RWPE1 (cell line): ENCODE measurements at regions of chr20 and their contacts with region 1.

Region 1: DNA sequence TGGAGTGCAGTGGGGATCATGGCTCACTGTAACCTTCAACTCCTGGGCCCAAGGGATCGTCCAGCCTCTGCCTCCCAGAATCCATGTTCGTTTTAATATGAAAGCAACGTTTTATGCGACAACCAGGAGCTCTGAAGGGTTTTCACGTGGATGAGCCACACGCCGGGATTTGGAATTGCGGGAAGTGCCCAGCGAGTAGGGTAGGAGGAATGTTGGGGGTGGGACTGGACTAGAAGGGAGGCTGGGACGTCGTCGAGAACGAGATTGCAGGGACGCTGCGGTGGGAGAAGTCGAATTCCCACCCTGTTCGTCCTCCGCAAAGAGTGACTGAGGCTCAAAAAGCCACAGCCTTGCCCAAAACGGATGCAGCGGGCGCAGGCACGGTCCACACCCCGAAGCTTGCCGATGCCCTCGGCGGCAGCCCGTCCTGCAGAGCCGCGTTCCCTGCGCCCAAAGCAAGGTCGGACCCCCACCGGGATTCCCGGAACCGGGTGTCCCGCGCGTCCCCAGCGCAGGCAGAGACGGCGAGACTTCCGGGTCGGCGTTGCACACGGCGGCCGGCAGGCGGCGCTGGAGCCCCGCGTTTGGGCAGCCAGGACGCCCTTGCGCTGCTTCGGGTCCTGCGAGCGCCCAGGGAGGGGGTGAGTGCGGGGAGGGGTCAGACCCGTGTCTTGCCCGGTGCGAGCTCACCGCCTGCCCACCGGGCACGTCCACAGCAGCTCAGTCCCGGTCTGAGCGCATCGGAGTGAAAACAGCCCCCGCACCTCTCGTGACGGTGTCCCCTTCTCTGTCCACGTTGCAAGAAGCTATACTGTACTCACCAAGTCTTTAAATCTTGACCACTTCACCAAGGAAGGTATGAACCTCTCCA is 87.8 kb downstream of the DHX35 start:
- DNase-seq: peak; percentile 74
- H3K27ac ChIP-seq: peak overlapping the region; percentile 45
- CTCF ChIP-seq: peak; percentile 100

Region 2: GRCh38 chr20:38919683-38920082 is 130.2 kb before region 1 on chr20:
- CTCF ChIA-PET with region 1: interaction called, 13 read pairs
- POLR2A ChIA-PET with region 1: no interaction called
- DNase-seq: no peak
- H3K27ac ChIP-seq: no peak overlapping the region
- CTCF ChIP-seq: no peak

Region 3: DNA sequence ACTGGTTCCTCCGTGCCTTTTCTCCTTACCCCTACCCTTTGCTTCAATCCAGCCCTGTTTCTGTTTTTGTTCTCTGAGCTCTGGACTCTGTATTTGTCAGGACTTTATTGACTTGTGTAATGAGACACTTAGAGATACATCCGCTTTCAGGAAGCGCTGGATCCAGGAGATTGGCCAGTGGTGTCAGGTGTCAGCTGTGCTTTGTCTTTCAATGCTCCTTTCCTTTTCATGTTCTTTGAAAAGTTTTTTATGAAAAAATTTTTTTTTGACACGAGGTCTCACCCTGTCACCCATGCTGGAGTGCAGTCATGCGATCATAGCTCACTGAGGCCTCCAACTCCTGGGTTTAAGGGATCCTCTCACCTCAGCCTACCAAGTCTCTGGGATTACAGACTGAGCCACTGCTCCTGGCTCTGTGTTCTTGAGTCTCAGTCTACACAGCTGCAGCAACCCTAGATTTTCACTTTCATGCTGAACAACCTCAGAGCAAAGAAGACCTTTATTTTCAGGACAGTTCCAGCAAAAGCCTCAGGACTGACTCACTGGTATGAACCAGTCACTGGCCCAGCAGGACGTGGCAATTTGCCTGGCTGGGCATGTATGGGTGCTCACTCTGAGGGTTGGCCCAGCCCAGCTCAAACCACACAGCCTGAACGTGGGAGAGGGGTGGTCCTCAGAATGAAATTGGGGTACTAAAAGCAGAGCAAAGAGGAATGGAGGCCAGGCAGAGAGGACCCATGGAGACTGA is 20.7 kb after region 1 on chr20:
- CTCF ChIA-PET with region 1: interaction called, 163 read pairs
- POLR2A ChIA-PET with region 1: interaction called, 3 read pairs
- DNase-seq: peak; percentile 84
- H3K27ac ChIP-seq: no peak overlapping the region
- CTCF ChIP-seq: no peak

Region 4: GRCh38 chr20:39081255-39081654 is 31.3 kb after region 1 on chr20:
- CTCF ChIA-PET with region 1: interaction called, 163 read pairs
- POLR2A ChIA-PET with region 1: interaction called, 3 read pairs
- DNase-seq: peak; percentile 94
- H3K27ac ChIP-seq: no peak overlapping the region
- CTCF ChIP-seq: peak; percentile 99

Region 5: GRCh38 chr20:39103732-39104131 is 53.8 kb after region 1 on chr20:
- CTCF ChIA-PET with region 1: interaction called, 10 read pairs
- POLR2A ChIA-PET with region 1: no interaction called
- DNase-seq: no peak
- H3K27ac ChIP-seq: no peak overlapping the region
- CTCF ChIP-seq: no peak